ENCODE measurements at regions of chr1 and their contacts with region 1.

Region 1: GRCh38 chr1:29290414-29290985 is 54.2 kb downstream of the PTPRU start:
- DNase-seq: no peak
- ATAC-seq: no peak

Region 2: GRCh38 chr1:29251164-29252130 is 39.1 kb before region 1 on chr1:
- intact Hi-C with region 1: loop called (anchors 2 kb)
- DNase-seq: no peak
- ATAC-seq: no peak

Region 3: DNA sequence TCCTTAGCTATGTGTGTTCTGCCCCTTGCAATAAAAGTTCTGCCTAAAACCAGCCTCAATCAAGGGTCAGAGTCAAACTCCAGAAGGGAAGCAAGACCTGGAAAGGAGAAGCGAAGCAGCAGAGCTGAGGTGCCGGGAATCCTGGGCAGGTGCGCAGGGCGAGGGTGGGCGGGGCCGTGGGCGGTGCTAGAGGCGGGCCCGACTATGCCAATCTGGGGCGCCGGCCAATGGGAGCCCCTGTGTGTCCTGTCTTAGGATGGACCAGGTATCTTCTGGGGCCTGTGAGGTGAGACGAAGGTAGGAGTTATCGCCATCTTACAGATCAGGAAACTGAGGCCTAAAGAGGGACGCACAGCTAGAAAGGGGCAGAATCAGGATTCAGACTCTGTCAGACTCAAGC is 66.2 kb after region 1 on chr1:
- intact Hi-C with region 1: no loop called
- DNase-seq: no peak
- ATAC-seq: no peak